Body of pancreas (tissue), 4 donors: ENCODE measurements at regions of chr3 and their contacts with region 1.

Region 1: GRCh38 chr3:167346171-167346570 is 33.9 kb downstream of the ZBBX start:
- DNase-seq: no peak
- ATAC-seq: no peak
- H3K4me3 ChIP-seq: no peak overlapping the region
- H3K27ac ChIP-seq: no peak overlapping the region
- H3K4me1 ChIP-seq: peaks cover 12% of the 10 kb centered on the region
- H3K27me3 ChIP-seq: no peaks in the 10 kb centered on the region
- CTCF ChIP-seq: no peak
- POLR2A ChIP-seq: no peak

Region 2: GRCh38 chr3:165854696-165855095 is 1491.5 kb before region 1 on chr3:
- intact Hi-C with region 1: loop called (anchors 5 kb)
- DNase-seq: no peak
- ATAC-seq: no peak
- H3K4me3 ChIP-seq: no peak overlapping the region
- H3K27ac ChIP-seq: no peak overlapping the region
- H3K4me1 ChIP-seq: no peaks in the 10 kb centered on the region
- H3K27me3 ChIP-seq: no peaks in the 10 kb centered on the region
- CTCF ChIP-seq: peak in 6 of 7 experiments; percentile 33 to 52 (median 42)
- POLR2A ChIP-seq: no peak

Region 3: GRCh38 chr3:167067787-167068161 is 278.4 kb before region 1 on chr3:
- intact Hi-C with region 1: no loop called
- DNase-seq: no peak
- ATAC-seq: peak; percentile 15
- H3K4me3 ChIP-seq: no peak overlapping the region
- H3K27ac ChIP-seq: no peak overlapping the region
- H3K4me1 ChIP-seq: peaks cover 12% of the 10 kb centered on the region
- H3K27me3 ChIP-seq: no peaks in the 10 kb centered on the region
- CTCF ChIP-seq: no peak
- POLR2A ChIP-seq: no peak